WTC11 (cell line): ENCODE measurements at regions of chr6 and their contacts with region 1.

Region 1: GRCh38 chr6:44064089-44064947 is 62.9 kb downstream of the MRPL14 start:
- DNase-seq: no peak
- ATAC-seq: no peak
- H3K4me3 Mint-ChIP-seq: no peak overlapping the region
- H3K27ac Mint-ChIP-seq: peak overlapping the region; percentile 2; the same call in 1 of the 2 replicates
- H3K4me1 Mint-ChIP-seq: peaks cover 15% of the 10 kb centered on the region
- H3K27me3 Mint-ChIP-seq: no peaks in the 10 kb centered on the region; the same call in 1 of the 2 replicates
- CTCF ChIP-seq: no peak

Region 2: DNA sequence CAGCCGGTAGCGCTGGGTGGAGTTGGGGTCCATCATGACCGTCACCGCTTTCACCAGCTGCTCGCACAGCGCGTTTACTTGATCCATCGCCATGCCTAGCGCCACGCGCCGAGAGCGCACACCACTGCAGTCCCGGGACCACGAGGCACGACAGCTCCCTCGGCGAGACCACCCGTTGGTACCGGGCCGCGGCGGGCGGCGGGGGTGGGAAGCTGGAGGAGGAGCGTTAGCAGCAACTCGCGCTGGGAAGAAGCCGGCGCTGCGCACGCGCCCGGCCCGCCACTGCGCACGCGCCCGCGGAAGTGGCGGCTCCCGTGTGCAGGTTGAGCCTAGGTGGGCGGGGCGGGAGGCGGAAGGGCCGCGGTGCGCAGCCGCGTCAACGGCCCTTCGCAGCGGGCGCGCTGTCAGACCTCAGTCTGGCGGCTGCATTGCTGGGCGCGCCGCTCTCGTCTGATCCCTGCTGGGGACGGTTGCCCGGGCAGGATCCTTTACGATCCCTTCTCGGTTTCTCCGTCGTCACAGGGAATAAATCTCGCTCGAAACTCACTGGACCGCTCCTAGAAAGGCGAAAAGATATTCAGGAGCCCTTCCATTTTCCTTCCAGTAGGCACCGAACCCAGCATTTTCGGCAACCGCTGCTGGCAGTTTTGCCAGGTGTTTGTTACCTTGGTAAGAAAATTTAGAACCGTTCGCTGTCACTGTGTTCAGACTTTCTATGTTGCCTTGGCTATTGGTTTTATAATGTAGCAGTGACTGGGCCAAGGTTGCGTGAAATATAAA is 488.4 kb before region 1 on chr6 and contains the starts of genes POLH and XPO5:
- CTCF ChIA-PET with region 1: no interaction called
- POLR2A ChIA-PET with region 1: no interaction called
- DNase-seq: peak; percentile 92
- ATAC-seq: peak; percentile 93
- H3K4me3 Mint-ChIP-seq: peak within 1 kb of the TSS; percentile 98
- H3K27ac Mint-ChIP-seq: peak within 1 kb of the TSS; percentile 95
- H3K4me1 Mint-ChIP-seq: peaks cover 15% of the 10 kb centered on the region
- H3K27me3 Mint-ChIP-seq: no peaks in the 10 kb centered on the region
- CTCF ChIP-seq: no peak
- total RNA-seq, gene POLH: 17.5 to 28.0 TPM (median 20.6 TPM) in 3 replicates
- total RNA-seq, gene XPO5: 84.9 to 97.8 TPM (median 86.0 TPM) in 3 replicates

Region 3: GRCh38 chr6:43769526-43770416 is 294.5 kb before region 1 on chr6 and contains the start of gene VEGFA:
- CTCF ChIA-PET with region 1: interaction called, 11 read pairs
- POLR2A ChIA-PET with region 1: interaction called, 7 read pairs
- DNase-seq: peak; percentile 94
- ATAC-seq: peak; percentile 49
- H3K4me3 Mint-ChIP-seq: peak within 1 kb of the TSS; percentile 98
- H3K27ac Mint-ChIP-seq: peak within 1 kb of the TSS; percentile 85
- H3K4me1 Mint-ChIP-seq: peaks cover 48% of the 10 kb centered on the region
- H3K27me3 Mint-ChIP-seq: peaks cover 11% of the 10 kb centered on the region
- CTCF ChIP-seq: peak; percentile 94
- total RNA-seq, gene VEGFA: 41.9 to 44.4 TPM (median 43.8 TPM) in 3 replicates

Region 4: GRCh38 chr6:43926634-43927524 is 137.4 kb before region 1 on chr6:
- CTCF ChIA-PET with region 1: interaction called, 10 read pairs
- POLR2A ChIA-PET with region 1: no interaction called
- DNase-seq: peak; percentile 77
- ATAC-seq: peak; percentile 68
- H3K4me3 Mint-ChIP-seq: no peak overlapping the region
- H3K27ac Mint-ChIP-seq: peak overlapping the region; percentile 68; the same call in 1 of the 2 replicates
- H3K4me1 Mint-ChIP-seq: peaks cover 15% of the 10 kb centered on the region
- H3K27me3 Mint-ChIP-seq: no peaks in the 10 kb centered on the region
- CTCF ChIP-seq: no peak

Region 5: DNA sequence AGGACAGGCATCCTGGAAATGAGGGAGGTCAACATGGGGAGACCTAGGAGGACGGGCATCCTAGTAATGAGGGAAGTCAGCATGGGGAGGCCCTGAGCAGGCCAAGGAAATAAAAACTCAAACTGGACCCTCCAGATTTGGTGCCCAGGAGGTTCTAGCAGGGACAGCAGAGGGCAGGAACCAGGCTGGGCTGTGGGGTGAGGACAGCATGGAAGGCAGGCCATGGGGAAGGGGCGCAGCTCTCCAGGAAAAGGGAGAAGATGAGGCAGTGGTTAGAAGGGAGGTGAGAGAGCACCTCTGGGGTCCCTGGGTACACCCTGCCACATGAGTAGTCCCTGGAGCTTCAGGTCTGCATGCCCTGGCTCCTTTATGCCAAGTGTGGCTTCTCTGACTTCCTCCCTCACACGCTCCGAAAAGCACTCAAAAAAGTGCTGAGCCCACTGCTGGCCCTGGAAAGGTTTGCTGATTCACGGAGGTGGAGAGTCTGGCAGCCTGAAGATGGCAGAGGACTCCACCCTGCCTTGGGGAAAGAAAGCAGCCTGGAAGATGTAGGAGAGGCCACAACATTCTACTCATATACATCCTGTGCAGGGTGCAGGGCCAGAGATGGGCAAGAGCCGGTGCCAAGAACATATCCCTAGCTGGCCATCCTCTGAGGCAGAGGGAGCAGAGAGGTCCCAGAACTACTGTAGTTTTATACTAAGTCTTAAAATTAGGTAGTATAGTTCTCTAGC is 92.0 kb before region 1 on chr6:
- CTCF ChIA-PET with region 1: interaction called, 11 read pairs
- POLR2A ChIA-PET with region 1: no interaction called
- DNase-seq: no peak
- ATAC-seq: no peak
- H3K4me3 Mint-ChIP-seq: no peak overlapping the region
- H3K27ac Mint-ChIP-seq: no peak overlapping the region
- H3K4me1 Mint-ChIP-seq: peaks cover 21% of the 10 kb centered on the region
- H3K27me3 Mint-ChIP-seq: peaks cover 8% of the 10 kb centered on the region
- CTCF ChIP-seq: no peak

Region 6: DNA sequence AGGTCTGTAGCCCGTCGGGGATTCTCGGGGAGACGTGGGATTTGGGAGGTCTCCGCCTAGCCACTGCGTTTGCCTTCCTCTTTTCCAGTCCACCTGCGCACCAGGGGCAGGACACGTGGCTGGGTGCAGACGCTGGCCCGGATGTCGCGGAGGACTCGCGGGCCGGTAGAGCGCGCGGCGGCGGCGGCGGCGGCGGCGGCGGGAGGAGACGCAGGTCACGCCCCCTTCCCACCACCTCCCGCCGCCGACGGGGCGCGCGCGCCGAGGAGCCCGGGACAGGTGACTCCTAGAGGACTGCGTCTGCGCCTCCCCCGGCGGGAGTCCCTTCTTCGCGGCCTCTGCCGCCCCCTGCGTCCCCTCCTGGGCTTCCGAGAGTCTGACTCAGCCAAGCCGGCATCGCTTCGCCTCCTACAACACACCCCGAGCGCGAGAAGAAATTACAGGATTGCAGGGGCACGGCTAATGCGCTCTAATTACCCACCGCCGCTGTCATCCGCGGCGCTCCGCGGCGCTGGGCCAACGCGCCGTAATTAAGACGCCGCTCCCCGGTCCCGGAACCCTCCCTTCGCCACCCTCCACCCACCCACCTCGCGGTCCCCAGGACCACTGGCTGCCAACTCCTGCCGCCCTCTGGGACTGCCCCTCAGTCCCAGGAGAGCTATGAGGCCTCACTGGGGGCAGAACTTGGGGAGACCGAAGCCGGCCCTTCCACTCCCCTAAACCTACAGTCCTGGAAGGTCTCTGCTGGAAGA is 61.5 kb before region 1 on chr6:
- CTCF ChIA-PET with region 1: interaction called, 35 read pairs
- POLR2A ChIA-PET with region 1: interaction called, 3 read pairs
- DNase-seq: peak; percentile 78
- ATAC-seq: peak; percentile 12
- H3K4me3 Mint-ChIP-seq: peak overlapping the region; percentile 69
- H3K27ac Mint-ChIP-seq: no peak overlapping the region
- H3K4me1 Mint-ChIP-seq: peaks cover 66% of the 10 kb centered on the region
- H3K27me3 Mint-ChIP-seq: peaks cover 37% of the 10 kb centered on the region
- CTCF ChIP-seq: no peak

Region 7: DNA sequence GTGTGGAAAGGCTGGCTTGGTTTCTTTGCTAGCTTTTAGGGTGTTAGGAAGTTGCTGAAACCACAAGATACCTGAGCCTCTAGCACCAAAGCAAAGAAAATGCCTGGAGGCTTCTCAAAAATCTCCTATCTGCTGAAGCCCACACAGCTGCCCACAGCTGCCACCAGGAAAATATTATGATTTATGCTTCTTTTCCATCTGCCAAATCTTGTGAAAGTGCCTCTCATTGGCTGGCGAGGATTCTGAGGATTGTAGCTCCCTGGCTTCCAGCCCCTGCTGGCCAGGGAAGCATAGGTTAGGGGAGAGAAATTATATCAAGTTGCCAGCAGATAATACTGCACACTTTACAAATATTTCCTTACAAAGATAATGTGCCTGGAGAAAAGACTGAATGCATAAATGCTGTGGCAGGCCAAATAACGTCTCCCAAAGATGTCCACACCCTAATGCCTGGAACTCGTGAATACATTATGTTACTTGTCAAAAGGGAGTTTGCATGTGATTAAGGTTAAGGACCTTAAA is 35.5 kb before region 1 on chr6:
- CTCF ChIA-PET with region 1: interaction called, 10 read pairs
- POLR2A ChIA-PET with region 1: no interaction called
- DNase-seq: no peak
- ATAC-seq: no peak
- H3K4me3 Mint-ChIP-seq: no peak overlapping the region
- H3K27ac Mint-ChIP-seq: no peak overlapping the region
- H3K4me1 Mint-ChIP-seq: no peaks in the 10 kb centered on the region
- H3K27me3 Mint-ChIP-seq: no peaks in the 10 kb centered on the region
- CTCF ChIP-seq: no peak

Region 8: DNA sequence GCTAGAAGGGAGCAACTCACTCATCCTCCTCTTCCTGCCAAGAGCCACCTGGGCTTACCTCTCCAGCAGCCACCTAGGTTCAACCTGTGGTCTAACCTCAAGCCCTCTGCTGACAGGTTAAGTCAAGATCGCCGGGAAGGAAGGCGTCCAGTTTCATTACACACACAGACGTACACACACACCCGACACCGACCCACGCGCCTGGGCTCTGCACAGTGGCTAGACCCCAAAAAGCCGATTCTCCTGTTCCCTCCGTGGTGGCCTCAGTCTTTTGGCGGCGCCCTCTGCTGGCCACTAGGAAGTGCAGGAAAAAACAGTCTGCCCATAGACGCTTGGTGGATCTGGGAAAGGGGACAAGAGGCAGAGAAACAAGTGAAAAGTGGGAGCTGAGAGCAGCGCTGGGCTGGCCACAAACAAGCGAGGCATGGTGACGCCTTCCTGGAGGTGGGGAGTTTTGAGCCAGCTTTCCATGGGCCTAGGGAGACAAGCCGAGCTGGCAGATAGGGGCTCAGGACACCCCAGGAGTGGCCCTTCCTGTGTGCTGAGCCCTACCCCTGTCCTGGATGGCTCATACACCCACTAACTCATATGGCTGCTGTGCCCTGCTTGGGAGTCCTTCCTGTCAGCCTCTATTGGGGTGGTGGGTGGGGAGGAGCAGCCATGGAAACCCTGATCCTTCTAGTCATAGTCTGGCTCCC is 10.3 kb after region 1 on chr6:
- CTCF ChIA-PET with region 1: interaction called, 96 read pairs
- POLR2A ChIA-PET with region 1: interaction called, 5 read pairs
- DNase-seq: peak; percentile 64
- ATAC-seq: peak; percentile 51
- H3K4me3 Mint-ChIP-seq: peak overlapping the region; percentile 77
- H3K27ac Mint-ChIP-seq: peak overlapping the region; percentile 31; the same call in 1 of the 2 replicates
- H3K4me1 Mint-ChIP-seq: peaks cover 45% of the 10 kb centered on the region
- H3K27me3 Mint-ChIP-seq: no peaks in the 10 kb centered on the region; the same call in 1 of the 2 replicates
- CTCF ChIP-seq: peak; percentile 85; the same call in 1 of the 2 replicates